HAP-1 (cell line): ENCODE measurements at regions of chr20 and their contacts with region 1.

Region 1: GRCh38 chr20:61896058-61896961 is 169.4 kb downstream of the TAF4 start:
- DNase-seq: peak; percentile 3 to 62
- H3K4me3 ChIP-seq: no peak overlapping the region
- H3K4me1 ChIP-seq: no peaks in the 10 kb centered on the region
- H3K27me3 ChIP-seq: peaks cover 10% of the 10 kb centered on the region

Region 2: GRCh38 chr20:59955132-59955796 is 1941.0 kb before region 1 on chr20:
- in situ Hi-C with region 1: loop called (anchors 25 kb)
- DNase-seq: peak; percentile 38 to 62
- H3K4me3 ChIP-seq: no peak overlapping the region
- H3K4me1 ChIP-seq: no peaks in the 10 kb centered on the region
- H3K27me3 ChIP-seq: no peaks in the 10 kb centered on the region

Region 3: DNA sequence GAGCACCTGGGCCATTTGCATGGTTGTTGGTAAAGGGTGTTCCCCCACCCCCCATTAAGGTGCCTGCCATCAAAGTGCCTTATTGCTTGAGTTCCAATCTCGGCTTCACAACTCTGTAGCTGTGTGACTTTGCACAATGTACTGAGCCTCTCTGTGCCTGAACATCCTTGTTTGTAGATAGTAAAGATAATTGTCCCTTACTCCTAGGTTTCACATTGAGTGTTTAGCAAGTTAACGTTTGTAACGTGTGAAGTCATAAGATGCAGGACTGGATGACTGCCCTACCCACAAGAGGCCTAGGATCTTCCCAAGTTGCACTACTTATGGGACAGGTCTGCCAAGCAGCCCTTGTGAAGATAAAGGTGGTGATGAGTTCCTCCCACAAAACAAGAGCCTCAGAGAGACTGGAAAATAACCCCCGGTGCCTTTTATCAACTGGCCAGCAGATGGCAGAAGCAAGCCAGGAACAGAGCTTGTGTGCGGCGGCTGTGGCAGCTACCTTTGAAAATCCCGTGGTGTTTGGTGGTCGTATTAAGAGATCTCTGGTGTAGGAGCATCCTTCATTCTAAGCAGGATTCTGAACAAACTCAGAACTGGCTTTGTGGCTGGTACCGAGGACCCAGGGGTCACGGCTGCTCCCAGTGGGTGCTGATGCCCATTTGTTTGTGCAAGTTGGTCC is 1839.0 kb before region 1 on chr20:
- in situ Hi-C with region 1: loop called (anchors 10 kb)
- DNase-seq: peak; percentile 40 to 63
- H3K4me3 ChIP-seq: no peak overlapping the region
- H3K4me1 ChIP-seq: no peaks in the 10 kb centered on the region
- H3K27me3 ChIP-seq: no peaks in the 10 kb centered on the region

Region 4: DNA sequence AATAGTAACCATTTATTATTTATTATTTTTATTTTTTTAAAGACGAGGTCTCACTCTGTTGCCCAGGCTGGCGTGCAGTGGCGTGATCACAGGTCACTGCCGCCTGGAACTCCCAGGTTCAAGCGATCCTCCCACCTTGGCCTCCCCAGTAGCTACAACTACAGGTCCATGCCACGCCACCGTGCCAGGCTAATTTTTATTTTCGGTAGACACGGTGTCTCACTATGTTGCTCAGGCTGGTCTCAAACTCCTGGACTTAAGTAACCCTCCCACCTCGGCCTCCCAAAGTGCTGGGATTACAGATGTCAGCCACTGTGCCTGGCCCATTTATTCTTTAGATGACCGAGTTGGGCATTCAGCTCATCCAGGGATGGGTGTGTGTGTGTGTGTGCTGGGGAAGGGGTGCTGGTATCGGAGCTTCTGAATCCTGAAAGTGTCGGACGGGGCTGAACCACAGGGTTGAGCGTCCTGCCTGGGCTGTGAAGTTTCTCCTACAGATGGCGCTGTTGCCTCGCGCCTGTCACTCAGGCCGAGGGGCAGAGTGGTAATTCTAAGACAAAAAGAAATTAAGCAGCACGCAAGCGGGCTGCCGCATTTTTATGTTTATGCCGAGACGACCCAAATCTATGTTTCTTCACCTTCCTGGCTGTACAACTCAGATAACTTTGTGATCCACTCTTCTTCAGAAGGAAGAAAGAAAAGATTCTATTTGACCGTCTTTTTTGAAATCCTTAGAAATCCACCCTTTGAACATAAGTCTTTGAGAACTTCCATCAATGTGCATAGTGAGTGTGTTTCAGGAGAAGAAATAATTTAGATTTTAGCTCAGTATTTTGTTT is 1685.3 kb before region 1 on chr20:
- in situ Hi-C with region 1: loop called (anchors 25 kb)
- DNase-seq: peak in 1 of 2 experiments; percentile 63
- H3K4me3 ChIP-seq: no peak overlapping the region
- H3K4me1 ChIP-seq: no peaks in the 10 kb centered on the region
- H3K27me3 ChIP-seq: no peaks in the 10 kb centered on the region